ENCODE measurements at regions of chr16 and their contacts with region 1.

Region 1: DNA sequence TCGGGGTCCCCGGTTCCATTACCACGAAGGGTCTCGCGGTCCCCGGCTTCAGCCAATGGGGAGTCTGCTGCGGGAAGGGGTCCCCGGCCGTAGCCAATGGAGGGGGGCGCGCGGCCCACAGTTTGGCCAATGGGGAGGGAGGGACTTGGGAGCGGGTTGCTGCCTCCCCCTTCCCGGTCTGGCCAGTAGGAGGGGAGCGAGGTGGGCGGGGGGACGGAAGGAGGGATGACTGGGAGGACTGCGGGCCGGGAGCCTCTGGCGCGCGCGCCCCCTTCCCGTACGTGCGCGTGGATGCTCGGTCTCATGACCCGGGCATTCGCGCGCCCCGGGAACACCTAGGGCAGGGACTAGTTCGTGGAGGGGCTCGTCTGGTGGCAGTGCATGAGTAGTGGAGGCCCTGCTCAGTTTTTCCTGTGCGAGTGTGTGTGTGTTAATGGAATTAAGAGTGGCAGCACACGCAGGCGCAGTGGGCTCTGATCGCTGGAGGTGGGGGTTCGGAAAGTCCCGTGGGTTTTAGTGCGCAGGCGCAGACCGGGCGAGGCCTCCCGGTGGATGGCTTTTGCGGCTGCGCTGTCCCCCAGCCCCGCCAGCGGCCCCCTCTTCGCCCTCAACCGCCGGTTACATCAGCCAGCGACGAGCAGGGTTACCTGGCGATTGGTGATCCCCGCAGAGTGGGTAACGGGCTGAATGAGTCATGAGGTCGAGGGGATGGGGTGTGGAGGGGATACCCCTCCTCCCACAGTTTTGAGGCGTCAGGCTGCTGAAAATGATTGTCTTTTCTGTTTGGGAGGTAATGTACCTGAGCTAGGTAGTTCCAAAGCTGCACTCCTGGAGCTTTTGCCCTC is 1.3 kb downstream of the ATXN2L start:
- DNase-seq: peak; percentile 98
- H3K4me3 Mint-ChIP-seq: peak overlapping the region; percentile 94
- H3K27ac Mint-ChIP-seq: peak overlapping the region; percentile 99
- H3K4me1 Mint-ChIP-seq: peaks cover 39% of the 10 kb centered on the region
- H3K27me3 Mint-ChIP-seq: no peaks in the 10 kb centered on the region

Region 2: DNA sequence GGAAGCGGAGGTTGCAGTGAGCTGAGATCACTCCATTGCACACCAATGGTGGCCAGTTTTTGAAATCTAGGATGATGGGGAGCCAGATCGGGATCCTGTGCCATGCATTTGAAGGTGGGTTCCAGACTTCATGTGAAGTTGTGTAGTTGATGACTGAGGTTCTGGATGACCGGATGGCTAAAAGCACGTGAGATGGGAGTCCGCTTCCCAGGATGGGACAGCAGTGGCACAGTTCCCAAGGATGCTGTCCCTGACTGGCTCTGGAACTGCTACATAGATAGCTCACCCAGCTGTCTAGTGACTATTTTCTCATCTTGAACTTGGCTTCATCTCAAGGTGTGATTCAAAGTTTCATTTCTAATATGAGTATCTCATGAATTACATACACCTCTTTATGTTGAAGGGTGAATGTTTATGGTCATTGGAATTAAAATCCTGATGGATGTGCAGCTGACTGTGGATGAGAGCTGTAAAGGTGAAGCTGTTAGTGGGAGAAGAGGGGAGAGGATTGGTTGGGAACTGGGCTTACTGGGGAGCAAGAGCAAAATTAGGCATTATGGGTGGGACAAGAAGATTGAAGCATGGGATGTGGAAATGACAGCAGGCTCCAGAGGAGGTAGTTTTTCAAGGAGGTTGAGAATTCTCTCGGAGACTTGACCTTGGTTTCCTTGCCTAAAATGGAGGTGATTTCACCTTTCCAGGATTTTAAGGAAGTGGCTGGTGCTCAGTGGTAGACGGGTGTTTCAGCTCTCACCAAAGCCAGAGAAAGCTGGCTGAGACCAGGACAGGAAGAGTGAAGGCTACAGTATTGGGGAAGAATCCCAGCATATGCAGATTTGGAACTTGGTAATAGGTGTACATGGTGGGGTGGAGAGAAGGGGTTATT is 13.8 kb after region 1 on chr16:
- CTCF ChIA-PET with region 1: interaction called, 3 read pairs
- POLR2A ChIA-PET with region 1: interaction called, 10 read pairs
- intact Hi-C with region 1: loop called (anchors 1 kb)
- DNase-seq: no peak
- H3K4me3 Mint-ChIP-seq: no peak overlapping the region
- H3K27ac Mint-ChIP-seq: peak overlapping the region; percentile 73
- H3K4me1 Mint-ChIP-seq: peaks cover 19% of the 10 kb centered on the region
- H3K27me3 Mint-ChIP-seq: no peaks in the 10 kb centered on the region

Region 3: GRCh38 chr16:28974437-28975157 is 150.5 kb after region 1 on chr16 and contains the start of gene SPNS1:
- CTCF ChIA-PET with region 1: no interaction called
- POLR2A ChIA-PET with region 1: no interaction called
- intact Hi-C with region 1: no loop called
- DNase-seq: peak; percentile 97
- H3K4me3 Mint-ChIP-seq: peak within 1 kb of the TSS; percentile 88
- H3K27ac Mint-ChIP-seq: peak within 1 kb of the TSS; percentile 90
- H3K4me1 Mint-ChIP-seq: peaks cover 31% of the 10 kb centered on the region
- H3K27me3 Mint-ChIP-seq: no peaks in the 10 kb centered on the region
- total RNA-seq, gene SPNS1: 11.3 to 12.0 TPM